AG04449 (cell line): ENCODE measurements at regions of chr6 and their contacts with region 1.

Region 1: GRCh38 chr6:2103644-2104523 is 141.5 kb downstream of the GMDS start:
- DNase-seq: no peak
- H3K4me3 ChIP-seq: no peak overlapping the region
- CTCF ChIP-seq: peak; percentile 40

Region 2: GRCh38 chr6:1601158-1602048 is 502.5 kb before region 1 on chr6:
- CTCF ChIA-PET with region 1: interaction called, 36 read pairs
- POLR2A ChIA-PET with region 1: no interaction called
- DNase-seq: no peak
- H3K4me3 ChIP-seq: no peak overlapping the region
- CTCF ChIP-seq: no peak

Region 3: GRCh38 chr6:1686117-1687098 is 417.5 kb before region 1 on chr6:
- CTCF ChIA-PET with region 1: interaction called, 10 read pairs
- POLR2A ChIA-PET with region 1: no interaction called
- DNase-seq: peak; percentile 99
- H3K4me3 ChIP-seq: peak overlapping the region; percentile 2; the same call in 1 of the 2 replicates
- CTCF ChIP-seq: no peak

Region 4: GRCh38 chr6:1940381-1940780 is 163.5 kb before region 1 on chr6:
- CTCF ChIA-PET with region 1: no interaction called
- POLR2A ChIA-PET with region 1: no interaction called
- DNase-seq: no peak
- H3K4me3 ChIP-seq: no peak overlapping the region
- CTCF ChIP-seq: no peak

Region 5: GRCh38 chr6:2116496-2116895 is 12.6 kb after region 1 on chr6:
- CTCF ChIA-PET with region 1: interaction called, 14 read pairs
- POLR2A ChIA-PET with region 1: no interaction called
- DNase-seq: no peak
- H3K4me3 ChIP-seq: no peak overlapping the region
- CTCF ChIP-seq: no peak

Region 6: GRCh38 chr6:2634139-2634964 is 530.5 kb after region 1 on chr6:
- CTCF ChIA-PET with region 1: interaction called, 13 read pairs
- POLR2A ChIA-PET with region 1: no interaction called
- DNase-seq: peak; percentile 14
- H3K4me3 ChIP-seq: peak overlapping the region; percentile 54
- CTCF ChIP-seq: peak; percentile 98